ENCODE measurements at regions of chr18 and their contacts with region 1.

Region 1: GRCh38 chr18:47863041-47863440 is 67.4 kb downstream of the SMAD2 start:
- DNase-seq: peak in 1 of 2 donors; percentile 36
- ATAC-seq: peak in 7 of 8 donors; percentile 69 to 97 (median 91)
- H3K4me3 ChIP-seq: no peak overlapping the region
- H3K27ac ChIP-seq: peak overlapping the region in 7 of 10 donors; percentile 4 to 61 (median 33)
- H3K4me1 ChIP-seq: peaks cover 0 to 7% (median 0%) of the 10 kb centered on the region in 9 donors
- H3K27me3 ChIP-seq: no peaks in the 10 kb centered on the region
- CTCF ChIP-seq: no peak

Region 2: DNA sequence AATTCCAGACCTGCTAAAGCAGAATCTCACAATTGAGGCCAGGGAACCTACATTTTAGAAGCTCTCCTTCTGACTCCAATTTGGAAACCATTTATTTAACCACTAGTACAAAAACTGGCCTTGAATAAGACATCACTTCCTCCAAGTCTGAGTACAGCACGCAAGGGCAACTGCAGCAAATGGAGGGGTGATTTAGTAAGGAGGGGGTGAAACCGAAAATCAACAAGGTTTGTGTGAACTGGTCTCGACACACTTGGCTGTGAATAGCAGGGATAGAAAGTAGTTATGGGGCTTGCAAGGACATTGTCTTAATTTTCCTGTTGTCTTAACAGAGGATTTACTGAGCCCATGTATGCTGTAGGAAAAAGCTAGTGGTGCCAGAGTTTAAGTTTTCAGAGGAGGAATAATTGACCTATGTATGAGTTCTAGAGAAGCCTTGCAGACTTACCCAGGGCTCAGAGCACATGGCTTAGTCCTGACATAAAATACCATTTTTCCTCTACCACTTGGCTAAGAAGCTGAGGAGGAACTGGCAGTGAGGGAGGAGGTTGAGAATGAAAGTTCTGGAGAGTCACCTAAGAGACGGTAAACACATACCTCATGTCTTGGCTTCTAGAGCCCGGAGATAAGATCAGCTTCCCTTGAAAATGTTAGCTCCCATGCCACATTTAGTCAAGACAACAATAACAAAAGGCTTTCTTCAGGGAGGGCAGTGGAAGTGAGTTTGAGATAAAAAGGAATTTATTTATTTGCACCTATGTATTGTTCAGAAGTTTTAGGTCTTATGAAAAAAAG is 47.4 kb before region 1 on chr18:
- intact Hi-C with region 1: loop called in 1 of 10 experiments (anchors 5 kb)
- DNase-seq: no peak
- ATAC-seq: peak in 1 of 8 donors; percentile 26
- H3K4me3 ChIP-seq: no peak overlapping the region
- H3K27ac ChIP-seq: no peak overlapping the region
- H3K4me1 ChIP-seq: peaks cover 0 to 16% (median 0%) of the 10 kb centered on the region in 9 donors
- H3K27me3 ChIP-seq: no peaks in the 10 kb centered on the region
- CTCF ChIP-seq: no peak

Region 3: GRCh38 chr18:47912343-47912742 is 49.3 kb after region 1 on chr18:
- intact Hi-C with region 1: loop called in 2 of 10 experiments (anchors 5 to 10 kb)
- DNase-seq: no peak
- ATAC-seq: peak in 6 of 8 donors; percentile 37 to 64 (median 57)
- H3K4me3 ChIP-seq: no peak overlapping the region
- H3K27ac ChIP-seq: peak overlapping the region; percentile 5 to 81 (median 71)
- H3K4me1 ChIP-seq: peaks cover 6 to 84% (median 55%) of the 10 kb centered on the region in 9 donors
- H3K27me3 ChIP-seq: no peaks in the 10 kb centered on the region
- CTCF ChIP-seq: no peak

Region 4: DNA sequence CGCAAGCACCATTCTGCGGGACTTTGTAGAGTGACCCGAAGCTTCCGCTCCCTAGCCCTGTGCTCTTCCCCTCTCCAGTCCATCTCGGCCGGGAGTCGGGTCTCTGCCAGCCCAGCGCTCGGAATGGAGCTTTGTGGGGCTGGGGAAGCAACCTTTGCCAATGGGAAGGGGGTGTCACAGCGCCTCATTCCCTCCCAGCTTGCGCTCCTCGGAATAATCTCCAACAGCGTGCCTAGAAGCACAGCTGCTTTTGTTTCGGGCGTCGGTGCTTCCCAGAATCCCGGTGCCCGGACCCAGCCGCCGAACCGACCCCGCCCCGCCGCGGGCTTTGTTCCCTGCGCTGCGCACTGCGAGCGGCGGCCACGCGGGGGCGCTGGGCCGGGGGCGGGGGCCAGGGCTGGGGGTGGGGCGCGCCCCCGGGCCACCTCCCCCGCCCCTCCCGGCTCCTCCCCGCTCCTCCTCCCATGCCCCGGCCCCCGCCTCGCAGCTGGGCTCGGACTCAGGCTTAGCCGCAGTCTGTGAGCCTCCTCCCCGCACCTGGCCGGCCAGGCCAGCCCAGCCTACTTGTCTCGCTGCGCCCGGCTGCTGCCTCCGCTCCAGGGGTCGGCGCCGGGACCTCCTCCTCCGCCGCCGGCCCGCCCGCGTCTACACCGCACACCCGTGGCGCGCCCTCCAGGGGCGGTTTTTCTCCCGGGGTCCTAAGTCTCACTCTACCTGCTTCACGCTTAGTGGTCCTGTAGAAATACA is 145.1 kb after region 1 on chr18:
- intact Hi-C with region 1: loop called in 1 of 10 experiments (anchors 10 kb)
- DNase-seq: peak; percentile 68 to 69
- ATAC-seq: peak; percentile 60 to 90 (median 85)
- H3K4me3 ChIP-seq: peak overlapping the region; percentile 22 to 68 (median 60)
- H3K27ac ChIP-seq: peak overlapping the region in 5 of 10 donors; percentile 30 to 68 (median 48)
- H3K4me1 ChIP-seq: peaks cover 0 to 27% (median 20%) of the 10 kb centered on the region in 9 donors
- H3K27me3 ChIP-seq: peaks cover 0 to 8% (median 0%) of the 10 kb centered on the region in 7 donors
- CTCF ChIP-seq: peak; percentile 59 to 94 (median 73)